Activated T-helper 1 cell treated with anti-CD3 and anti-CD28 coated beads, Interleukin-12 subunit alpha, Interleukin-12 subunit beta, Interleukin-2, Interleukin-4 antibody, amounts not matched to agents 30 ng/mL and 10 ng/mL and 1 ng/mL, durations not matched to agents 14 hours and 24 hours and 36 hours (primary cell): ENCODE measurements at regions of chr13 and their contacts with region 1.

Region 1: DNA sequence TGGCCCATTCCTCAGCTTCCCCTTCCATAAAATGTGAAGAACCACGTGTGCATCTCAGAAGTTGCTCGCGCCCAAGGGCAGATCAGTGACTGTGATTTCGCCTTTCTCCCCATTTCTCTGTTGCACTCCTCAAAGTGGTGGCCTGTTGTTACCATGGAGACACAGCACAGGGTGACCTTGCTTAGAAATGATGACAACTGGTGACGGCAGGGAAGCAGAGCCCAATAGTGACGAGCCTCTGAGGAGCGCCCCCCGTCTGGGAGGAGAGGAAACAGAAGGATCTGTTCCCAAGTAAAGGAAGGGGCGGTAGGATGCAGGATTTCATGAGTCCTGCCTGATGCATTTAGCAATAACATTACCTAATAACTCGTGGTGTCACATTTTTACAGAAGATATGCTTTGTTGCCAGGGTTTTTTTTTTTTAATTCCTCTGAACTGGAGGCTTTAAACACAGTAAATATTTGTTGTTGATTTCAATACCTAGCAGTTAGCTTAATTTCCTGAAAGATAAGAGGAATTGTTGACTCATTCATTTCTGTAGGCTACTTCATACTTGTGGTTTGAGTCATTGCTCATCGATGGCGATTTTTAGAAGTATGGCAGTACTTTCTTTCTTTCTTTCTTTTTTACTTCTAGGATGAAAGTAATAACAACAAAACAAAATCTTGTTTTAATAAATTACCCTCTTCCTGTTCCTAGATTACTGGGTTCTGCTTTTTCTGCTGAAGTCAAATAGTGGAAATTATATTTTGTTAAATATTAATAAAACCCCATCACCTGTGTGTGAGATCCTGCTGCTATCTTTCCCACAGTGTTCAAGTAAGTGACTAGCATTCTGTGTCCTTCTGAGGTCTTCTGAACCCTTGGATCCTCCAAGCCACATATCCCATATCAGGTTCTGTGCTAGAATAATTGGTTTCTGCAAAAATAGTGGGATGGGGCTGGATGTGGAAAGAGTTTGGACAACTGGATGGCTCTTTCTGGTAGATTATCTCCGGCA is 36.0 kb downstream of the MBNL2 start:
- DNase-seq: no peak
- H3K4me3 Mint-ChIP-seq: peak overlapping the region; percentile 21
- H3K27ac Mint-ChIP-seq: peak overlapping the region; percentile 87
- H3K4me1 Mint-ChIP-seq: peaks cover 84% of the 10 kb centered on the region
- H3K27me3 Mint-ChIP-seq: no peaks in the 10 kb centered on the region

Region 2: DNA sequence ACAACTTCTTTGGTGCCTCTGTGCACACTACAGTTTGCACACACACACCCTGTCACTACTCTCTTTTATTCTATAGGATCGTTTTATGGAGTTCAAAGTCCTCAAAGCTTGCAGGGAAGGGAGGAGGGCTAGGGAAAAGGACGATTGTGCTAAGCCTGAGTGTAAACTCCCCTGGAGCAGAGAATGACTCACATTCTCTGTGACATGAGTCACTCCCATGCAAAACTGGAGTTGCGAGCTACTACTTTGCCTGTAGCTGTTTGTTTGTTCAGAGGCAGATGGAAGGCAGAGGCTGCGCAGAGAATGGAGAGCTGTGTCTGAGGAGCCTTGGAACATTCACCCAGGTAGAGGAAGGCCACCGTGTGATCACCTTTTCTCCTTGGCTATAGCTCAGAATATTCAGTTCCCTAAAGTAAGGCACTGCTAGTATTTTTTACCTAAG is 116.5 kb before region 1 on chr13:
- intact Hi-C with region 1: loop called (anchors 5 kb)
- DNase-seq: no peak
- H3K4me3 Mint-ChIP-seq: no peak overlapping the region
- H3K27ac Mint-ChIP-seq: peak overlapping the region; percentile 7
- H3K4me1 Mint-ChIP-seq: peaks cover 13% of the 10 kb centered on the region
- H3K27me3 Mint-ChIP-seq: peaks cover 10% of the 10 kb centered on the region

Region 3: GRCh38 chr13:97221989-97222700 is 36.0 kb before region 1 on chr13 and contains the start of gene MBNL2:
- intact Hi-C with region 1: loop called (anchors 1 kb)
- DNase-seq: peak; percentile 80
- H3K4me3 Mint-ChIP-seq: peak within 1 kb of the TSS; percentile 87
- H3K27ac Mint-ChIP-seq: peak within 1 kb of the TSS; percentile 82
- H3K4me1 Mint-ChIP-seq: peaks cover 49% of the 10 kb centered on the region
- H3K27me3 Mint-ChIP-seq: no peaks in the 10 kb centered on the region
- total RNA-seq, gene MBNL2: 20.7 and 24.2 TPM in 2 replicates

Region 4: GRCh38 chr13:97295283-97296182 is 37.4 kb after region 1 on chr13:
- intact Hi-C with region 1: loop called (anchors 1 kb)
- DNase-seq: no peak
- H3K4me3 Mint-ChIP-seq: no peak overlapping the region
- H3K27ac Mint-ChIP-seq: no peak overlapping the region
- H3K4me1 Mint-ChIP-seq: peaks cover 7% of the 10 kb centered on the region
- H3K27me3 Mint-ChIP-seq: peaks cover 1% of the 10 kb centered on the region